MCF 10A (cell line): ENCODE measurements at regions of chr10 and their contacts with region 1.

Region 1: DNA sequence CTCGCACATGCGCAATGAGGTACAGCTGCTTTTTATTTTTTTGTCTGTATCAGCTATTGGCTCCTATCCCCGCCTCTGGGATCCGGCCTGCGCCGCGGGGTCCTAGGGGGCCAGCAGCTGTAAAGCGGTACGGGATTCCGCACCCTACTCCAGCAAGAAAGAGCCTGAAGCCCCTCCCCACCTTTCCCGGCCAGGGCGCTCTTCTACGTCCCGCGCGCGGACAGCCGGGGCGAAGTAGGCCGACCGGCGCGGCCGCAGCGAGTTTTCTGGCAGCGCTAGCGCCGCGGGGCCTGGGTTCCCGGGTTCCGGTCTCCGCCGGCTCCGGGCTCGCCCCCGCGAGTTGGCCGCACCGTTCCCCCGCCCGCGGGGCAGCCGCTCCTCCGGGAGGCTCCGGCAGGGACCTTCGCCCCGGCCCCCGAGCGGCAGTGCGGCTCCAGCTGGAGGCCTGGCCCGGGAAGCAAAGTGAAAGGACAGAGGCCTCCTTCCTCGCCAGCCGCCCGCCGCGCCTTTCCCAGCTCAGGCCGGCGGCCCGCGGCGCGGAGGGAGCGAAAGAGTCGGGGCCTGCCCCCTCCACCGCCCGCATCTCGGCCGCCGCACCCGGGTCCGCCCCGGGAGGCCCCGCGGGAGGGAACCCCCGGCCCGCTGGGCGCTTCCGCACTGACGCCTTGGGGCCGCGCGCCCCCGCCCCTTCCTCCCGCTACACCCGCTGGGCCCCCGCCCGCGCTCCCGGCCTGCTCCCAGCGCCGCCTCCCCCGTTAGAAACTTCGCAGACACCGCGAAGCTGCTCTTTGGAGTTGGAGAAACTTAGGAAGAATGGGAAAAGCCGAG is 4.7 kb upstream of the SPAG6 start:
- DNase-seq: peak; percentile 79
- H3K4me3 Mint-ChIP-seq: peak overlapping the region; percentile 75
- H3K27ac Mint-ChIP-seq: peak overlapping the region; percentile 85
- H3K4me1 Mint-ChIP-seq: peaks cover 9% of the 10 kb centered on the region
- H3K27me3 Mint-ChIP-seq: peaks cover 15% of the 10 kb centered on the region
- CTCF ChIP-seq: no peak

Region 2: DNA sequence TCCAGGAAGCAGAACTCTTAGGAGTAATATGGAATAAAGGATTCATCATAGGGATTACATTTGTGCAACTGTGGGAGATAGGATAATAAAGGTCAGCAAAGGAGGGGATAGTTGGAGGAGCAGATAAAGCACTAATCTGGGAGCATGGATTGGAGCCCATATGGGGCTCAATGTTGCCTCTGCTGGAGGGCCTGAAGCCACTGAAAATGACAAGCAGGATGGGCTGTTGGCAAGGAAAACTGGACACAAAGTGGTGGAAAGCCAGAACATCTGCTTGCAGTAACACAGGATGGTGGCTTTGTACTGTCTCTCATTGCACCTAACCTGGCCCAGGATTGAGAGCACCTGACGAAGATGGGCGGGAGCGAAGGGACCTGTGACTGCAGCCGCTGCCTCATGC is 39.4 kb before region 1 on chr10:
- CTCF ChIA-PET with region 1: no interaction called
- POLR2A ChIA-PET with region 1: no interaction called
- intact Hi-C with region 1: no loop called
- DNase-seq: no peak
- H3K4me3 Mint-ChIP-seq: no peak overlapping the region
- H3K27ac Mint-ChIP-seq: no peak overlapping the region
- H3K4me1 Mint-ChIP-seq: no peaks in the 10 kb centered on the region
- H3K27me3 Mint-ChIP-seq: no peaks in the 10 kb centered on the region
- CTCF ChIP-seq: no peak

Region 3: GRCh38 chr10:22427890-22428571 is 87.5 kb after region 1 on chr10:
- CTCF ChIA-PET with region 1: no interaction called
- POLR2A ChIA-PET with region 1: interaction called, 11 read pairs
- intact Hi-C with region 1: no loop called
- DNase-seq: peak; percentile 93
- H3K4me3 Mint-ChIP-seq: peak overlapping the region; percentile 49
- H3K27ac Mint-ChIP-seq: peak overlapping the region; percentile 63
- H3K4me1 Mint-ChIP-seq: peaks cover 41% of the 10 kb centered on the region
- H3K27me3 Mint-ChIP-seq: no peaks in the 10 kb centered on the region
- CTCF ChIP-seq: no peak